B cell (primary cell): ENCODE measurements at regions of chr12 and their contacts with region 1.

Region 1: GRCh38 chr12:98490501-98491453 is 24.6 kb upstream of the TMPO start:
- DNase-seq: peak; percentile 88
- ATAC-seq: peak; percentile 95
- H3K4me3 ChIP-seq: peak overlapping the region in 1 of 5 experiments; percentile 26
- H3K4me3 Mint-ChIP-seq: peak overlapping the region; percentile 32
- H3K27ac ChIP-seq: peak overlapping the region; percentile 0 to 14
- H3K27ac Mint-ChIP-seq: peak overlapping the region; percentile 92
- H3K4me1 ChIP-seq: peaks cover 6% of the 10 kb centered on the region in 2 donors
- H3K4me1 Mint-ChIP-seq: peaks cover 5% of the 10 kb centered on the region
- H3K27me3 ChIP-seq: no peaks in the 10 kb centered on the region
- H3K27me3 Mint-ChIP-seq: no peaks in the 10 kb centered on the region
- CTCF ChIP-seq: peak; percentile 84

Region 2: GRCh38 chr12:98424726-98425401 is 65.9 kb before region 1 on chr12:
- CTCF ChIA-PET with region 1: interaction called, 6 read pairs
- POLR2A ChIA-PET with region 1: no interaction called
- intact Hi-C with region 1: loop called (anchors 1 kb)
- DNase-seq: peak; percentile 55
- ATAC-seq: peak; percentile 36
- H3K4me3 ChIP-seq: no peak overlapping the region
- H3K4me3 Mint-ChIP-seq: no peak overlapping the region
- H3K27ac ChIP-seq: no peak overlapping the region
- H3K27ac Mint-ChIP-seq: no peak overlapping the region
- H3K4me1 ChIP-seq: peaks cover 0 to 3% of the 10 kb centered on the region in 2 donors
- H3K4me1 Mint-ChIP-seq: no peaks in the 10 kb centered on the region
- H3K27me3 ChIP-seq: no peaks in the 10 kb centered on the region
- H3K27me3 Mint-ChIP-seq: peaks cover 3% of the 10 kb centered on the region
- CTCF ChIP-seq: peak; percentile 67

Region 3: DNA sequence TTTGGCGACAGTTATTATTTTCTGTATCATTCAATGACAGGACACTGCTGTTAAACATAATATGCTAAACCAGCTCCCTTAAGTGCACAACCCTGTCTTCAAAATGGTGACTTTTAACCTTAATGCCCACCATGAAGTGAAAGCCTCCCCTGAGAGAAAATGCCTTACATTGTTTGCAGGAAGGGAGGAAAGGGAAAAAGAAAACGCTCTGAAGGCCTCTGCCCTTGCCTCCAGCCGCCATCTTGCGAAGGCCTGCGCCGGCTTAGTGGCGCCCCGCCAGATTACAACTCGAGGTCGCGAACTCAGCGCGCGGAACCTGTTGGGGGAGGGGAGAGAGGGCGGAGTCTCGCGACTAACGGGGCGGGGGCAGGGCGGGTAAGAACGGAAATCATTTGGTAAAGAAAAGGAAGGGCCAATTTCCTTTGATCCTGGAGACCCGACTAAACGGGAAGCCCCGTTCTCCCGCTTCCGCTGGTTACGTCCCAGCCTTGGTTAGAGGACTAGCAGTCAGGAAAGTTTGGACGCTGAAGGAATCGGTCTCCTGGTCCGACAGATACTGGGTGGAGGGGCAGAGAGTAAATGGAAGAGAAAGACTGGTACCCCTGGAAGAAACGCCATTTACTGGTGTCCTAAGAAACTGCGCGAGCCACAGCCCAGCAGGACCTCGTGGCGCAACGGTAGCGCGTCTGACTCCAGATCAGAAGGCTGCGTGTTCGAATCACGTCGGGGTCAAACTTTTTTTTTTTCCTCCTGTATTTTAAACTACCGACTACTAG is 13.0 kb after region 1 on chr12:
- CTCF ChIA-PET with region 1: interaction called, 26 read pairs
- POLR2A ChIA-PET with region 1: interaction called, 15 read pairs
- intact Hi-C with region 1: loop called (anchors 1 kb)
- DNase-seq: peak; percentile 98
- ATAC-seq: peak; percentile 88
- H3K4me3 ChIP-seq: peak overlapping the region; percentile 75 to 96 (median 95)
- H3K4me3 Mint-ChIP-seq: peak overlapping the region; percentile 100
- H3K27ac ChIP-seq: peak overlapping the region; percentile 98 to 99
- H3K27ac Mint-ChIP-seq: peak overlapping the region; percentile 100
- H3K4me1 ChIP-seq: peaks cover 4 to 13% of the 10 kb centered on the region in 2 donors
- H3K4me1 Mint-ChIP-seq: peaks cover 23% of the 10 kb centered on the region
- H3K27me3 ChIP-seq: no peaks in the 10 kb centered on the region
- H3K27me3 Mint-ChIP-seq: peaks cover 3% of the 10 kb centered on the region
- CTCF ChIP-seq: no peak

Region 4: GRCh38 chr12:98509063-98509462 is 18.3 kb after region 1 on chr12:
- CTCF ChIA-PET with region 1: interaction called, 195 read pairs
- POLR2A ChIA-PET with region 1: interaction called, 15 read pairs
- intact Hi-C with region 1: no loop called
- DNase-seq: no peak
- ATAC-seq: no peak
- H3K4me3 ChIP-seq: no peak overlapping the region
- H3K4me3 Mint-ChIP-seq: no peak overlapping the region
- H3K27ac ChIP-seq: no peak overlapping the region
- H3K27ac Mint-ChIP-seq: no peak overlapping the region
- H3K4me1 ChIP-seq: peaks cover 11 to 19% of the 10 kb centered on the region in 2 donors
- H3K4me1 Mint-ChIP-seq: peaks cover 25% of the 10 kb centered on the region
- H3K27me3 ChIP-seq: no peaks in the 10 kb centered on the region
- H3K27me3 Mint-ChIP-seq: peaks cover 1% of the 10 kb centered on the region
- CTCF ChIP-seq: no peak

Region 5: DNA sequence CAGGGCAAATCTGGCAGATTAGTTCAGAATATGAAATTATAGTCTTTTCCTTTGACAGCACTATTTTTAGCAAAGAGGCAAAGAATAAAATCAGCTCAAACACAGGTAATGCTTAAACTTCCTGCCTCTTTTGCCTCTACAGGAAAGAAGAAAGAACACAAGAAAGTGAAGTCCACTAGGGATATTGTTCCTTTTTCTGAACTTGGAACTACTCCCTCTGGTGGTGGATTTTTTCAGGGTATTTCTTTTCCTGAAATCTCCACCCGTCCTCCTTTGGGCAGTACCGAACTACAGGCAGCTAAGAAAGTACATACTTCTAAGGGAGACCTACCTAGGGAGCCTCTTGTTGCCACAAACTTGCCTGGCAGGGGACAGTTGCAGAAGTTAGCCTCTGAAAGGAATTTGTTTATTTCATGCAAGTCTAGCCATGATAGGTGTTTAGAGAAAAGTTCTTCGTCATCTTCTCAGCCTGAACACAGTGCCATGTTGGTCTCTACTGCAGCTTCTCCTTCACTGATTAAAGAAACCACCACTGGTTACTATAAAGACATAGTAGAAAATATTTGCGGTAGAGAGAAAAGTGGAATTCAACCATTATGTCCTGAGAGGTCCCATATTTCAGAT is 42.0 kb after region 1 on chr12:
- CTCF ChIA-PET with region 1: interaction called, 36 read pairs
- POLR2A ChIA-PET with region 1: no interaction called
- intact Hi-C with region 1: loop called (anchors 1 kb)
- DNase-seq: peak; percentile 67
- ATAC-seq: peak; percentile 31
- H3K4me3 ChIP-seq: no peak overlapping the region
- H3K4me3 Mint-ChIP-seq: no peak overlapping the region
- H3K27ac ChIP-seq: no peak overlapping the region
- H3K27ac Mint-ChIP-seq: peak overlapping the region; percentile 46
- H3K4me1 ChIP-seq: no peaks in the 10 kb centered on the region
- H3K4me1 Mint-ChIP-seq: peaks cover 2% of the 10 kb centered on the region
- H3K27me3 ChIP-seq: no peaks in the 10 kb centered on the region
- H3K27me3 Mint-ChIP-seq: no peaks in the 10 kb centered on the region
- CTCF ChIP-seq: peak; percentile 82